ENCODE measurements at regions of chr22 and their contacts with region 1.

Region 1: DNA sequence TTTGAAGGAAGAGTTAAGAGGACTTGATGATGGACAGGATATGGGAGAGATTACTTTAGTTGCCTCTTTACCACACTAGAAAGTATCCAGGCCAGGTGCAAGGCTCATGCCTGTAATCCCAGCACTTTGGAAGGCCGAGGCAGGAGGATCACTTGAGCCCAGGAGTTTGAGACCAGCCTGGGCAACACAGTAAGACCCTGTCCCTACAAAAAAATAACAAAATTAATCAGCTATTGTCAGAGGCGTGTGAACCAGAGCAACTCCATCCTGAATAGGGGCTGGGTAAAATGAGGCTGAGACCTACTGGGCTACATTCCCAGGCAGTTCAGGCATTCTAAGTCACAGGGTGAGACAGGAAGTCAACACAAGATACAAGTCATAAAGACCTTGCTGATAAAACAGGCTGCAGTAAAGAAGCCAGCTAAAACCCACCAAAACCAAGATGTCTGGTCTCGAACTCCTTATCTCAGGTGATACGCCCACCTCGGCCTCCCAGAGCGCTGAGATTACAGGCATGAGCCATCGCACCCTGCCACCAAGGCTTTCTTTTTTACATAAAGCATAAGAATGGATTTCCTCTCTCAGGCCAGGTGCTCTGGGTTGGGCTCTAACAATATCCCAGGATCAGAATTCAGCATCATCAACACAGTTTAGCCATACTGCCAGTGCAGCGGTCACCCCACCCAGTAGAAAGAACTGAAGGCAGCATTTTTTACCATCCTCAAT is 17.8 kb downstream of the PI4KA start:
- DNase-seq: no peak

Region 2: DNA sequence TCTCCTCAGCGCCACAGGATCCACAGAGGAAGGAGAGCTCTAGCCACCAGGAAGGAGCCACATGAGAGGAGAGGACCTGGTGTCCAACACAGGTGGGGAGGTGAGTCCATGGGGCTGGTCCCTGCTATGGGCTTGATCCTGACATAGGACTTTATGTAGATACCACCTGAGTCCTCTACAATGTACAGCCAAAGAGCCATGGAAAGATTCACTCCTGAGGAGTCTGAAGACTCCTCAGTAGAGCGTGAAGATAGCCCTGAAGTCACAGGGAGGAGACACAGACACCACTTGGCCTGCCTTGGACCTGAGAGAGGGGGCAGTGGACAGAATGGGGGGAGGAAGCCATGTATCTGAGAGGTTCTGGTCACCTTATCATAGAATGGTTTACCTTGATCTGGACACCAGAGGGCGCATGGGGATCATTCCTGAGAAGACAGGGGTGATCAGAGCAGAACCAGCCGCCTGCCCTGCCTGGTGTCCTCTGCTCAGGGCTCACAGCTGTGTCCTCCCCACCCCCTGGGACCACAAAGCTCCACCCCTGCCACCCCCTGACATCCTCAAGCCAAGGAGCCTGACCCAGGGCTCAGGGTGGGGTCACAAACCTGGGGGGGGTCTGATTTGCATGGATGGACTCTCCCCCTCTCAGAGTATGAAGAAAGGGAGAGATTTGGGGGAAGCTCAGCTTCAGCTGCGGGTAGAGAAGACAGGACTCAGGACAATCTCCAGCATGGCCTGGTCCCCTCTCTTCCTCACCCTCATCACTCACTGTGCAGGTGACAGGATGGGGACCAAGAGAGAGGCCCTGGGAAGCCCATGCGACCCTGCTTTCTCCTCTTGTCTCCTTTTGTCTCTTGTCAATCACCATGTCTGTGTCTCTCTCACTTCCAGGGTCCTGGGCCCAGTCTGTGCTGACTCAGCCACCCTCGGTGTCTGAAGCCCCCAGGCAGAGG is 1590.7 kb after region 1 on chr22:
- intact Hi-C with region 1: loop called in 1 of 2 experiments (anchors 10 kb)
- DNase-seq: no peak

Measured in posterior vena cava (tissue), 2 donors.